ENCODE measurements at regions of chr10 and their contacts with region 1.

Region 1: DNA sequence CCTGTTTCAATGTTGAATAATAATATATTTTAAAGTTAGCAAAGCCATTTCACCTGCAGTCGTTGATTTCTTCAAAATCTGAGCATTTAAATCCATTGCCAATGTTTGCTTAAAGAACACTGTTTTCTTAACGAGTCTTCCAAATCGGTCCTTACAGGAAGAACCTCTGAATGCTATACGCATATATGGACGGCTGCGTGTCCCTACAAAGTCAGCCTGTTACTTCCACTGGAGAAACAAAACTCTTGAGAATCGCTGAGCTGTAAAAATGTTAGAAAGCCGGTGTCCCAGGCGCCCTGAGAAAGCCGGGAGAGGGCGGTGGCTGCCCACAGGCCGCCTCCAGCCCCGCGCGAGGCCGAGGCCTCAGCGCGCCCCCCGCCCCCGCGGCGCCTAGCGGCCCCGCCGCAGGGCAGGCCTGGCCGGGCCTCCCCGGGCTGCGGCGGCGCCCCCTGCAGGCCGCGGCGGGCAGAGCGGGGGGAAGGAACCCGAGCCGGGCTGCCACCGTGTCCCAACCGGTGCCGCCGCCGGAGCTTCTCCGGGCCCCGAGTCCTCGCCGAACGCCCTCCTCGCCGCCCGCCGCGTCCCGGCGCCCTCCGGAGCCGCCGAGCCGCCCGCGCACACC is at the start of gene FHIP2A:
- DNase-seq: peak; percentile 69 to 96 (median 87)
- ATAC-seq: peak; percentile 98
- H3K4me3 ChIP-seq: peak within 1 kb of the TSS; percentile 83
- H3K4me3 Mint-ChIP-seq: peak within 1 kb of the TSS; percentile 79 to 96 (median 94)
- H3K27ac ChIP-seq: peak within 1 kb of the TSS; percentile 87
- H3K27ac Mint-ChIP-seq: peak within 1 kb of the TSS; percentile 86 to 95 (median 92)
- H3K4me1 ChIP-seq: peaks cover 6 to 22% of the 10 kb centered on the region in 2 donors
- H3K4me1 Mint-ChIP-seq: peaks cover 14 to 44% (median 33%) of the 10 kb centered on the region in 7 donors
- H3K27me3 ChIP-seq: no peaks in the 10 kb centered on the region
- H3K27me3 Mint-ChIP-seq: peaks cover 0 to 29% (median 0%) of the 10 kb centered on the region in 5 donors
- total RNA-seq, gene FHIP2A: 17.5 to 28.7 (median 19.6) TPM

Region 2: GRCh38 chr10:113854011-113854760 is 967.2 kb before region 1 on chr10 and contains the starts of genes DCLRE1A and NHLRC2:
- CTCF ChIA-PET with region 1: no interaction called
- POLR2A ChIA-PET with region 1: no interaction called
- intact Hi-C with region 1: loop called in 1 of 2 experiments (anchors 10 kb)
- DNase-seq: peak; percentile 26 to 55 (median 50)
- ATAC-seq: peak; percentile 73
- H3K4me3 ChIP-seq: peak within 1 kb of the TSS; percentile 90
- H3K4me3 Mint-ChIP-seq: peak within 1 kb of the TSS; percentile 90 to 100 (median 97)
- H3K27ac ChIP-seq: peak within 1 kb of the TSS; percentile 79
- H3K27ac Mint-ChIP-seq: peak within 1 kb of the TSS; percentile 89 to 100 (median 97)
- H3K4me1 ChIP-seq: peaks cover 3 to 42% of the 10 kb centered on the region in 2 donors
- H3K4me1 Mint-ChIP-seq: peaks cover 24 to 60% (median 52%) of the 10 kb centered on the region in 7 donors
- H3K27me3 ChIP-seq: no peaks in the 10 kb centered on the region
- H3K27me3 Mint-ChIP-seq: no peaks in the 10 kb centered on the region
- total RNA-seq, gene DCLRE1A: 1.5 to 12.9 (median 4.3) TPM
- total RNA-seq, gene NHLRC2: 10.3 to 25.9 (median 20.5) TPM

Region 3: GRCh38 chr10:114304017-114304570 is 517.3 kb before region 1 on chr10:
- CTCF ChIA-PET with region 1: interaction called, 12 read pairs
- POLR2A ChIA-PET with region 1: no interaction called
- intact Hi-C with region 1: loop called (anchors 1 kb)
- DNase-seq: peak; percentile 19 to 67 (median 52)
- ATAC-seq: peak; percentile 60
- H3K4me3 ChIP-seq: peak overlapping the region; percentile 68
- H3K4me3 Mint-ChIP-seq: peak overlapping the region; percentile 83 to 94 (median 92)
- H3K27ac ChIP-seq: peak overlapping the region; percentile 6
- H3K27ac Mint-ChIP-seq: peak overlapping the region in 8 of 9 donors; percentile 4 to 86 (median 68)
- H3K4me1 ChIP-seq: peaks cover 4 to 5% of the 10 kb centered on the region in 2 donors
- H3K4me1 Mint-ChIP-seq: peaks cover 9 to 13% (median 12%) of the 10 kb centered on the region in 7 donors
- H3K27me3 ChIP-seq: no peaks in the 10 kb centered on the region
- H3K27me3 Mint-ChIP-seq: no peaks in the 10 kb centered on the region

Region 4: GRCh38 chr10:114550756-114551635 is 270.4 kb before region 1 on chr10:
- CTCF ChIA-PET with region 1: no interaction called
- POLR2A ChIA-PET with region 1: no interaction called
- intact Hi-C with region 1: loop called in 1 of 2 experiments (anchors 1 kb)
- DNase-seq: peak in 5 of 9 donors; percentile 33 to 50 (median 40)
- ATAC-seq: peak; percentile 26
- H3K4me3 ChIP-seq: no peak overlapping the region
- H3K4me3 Mint-ChIP-seq: no peak overlapping the region
- H3K27ac ChIP-seq: no peak overlapping the region
- H3K27ac Mint-ChIP-seq: peak overlapping the region in 5 of 9 donors; percentile 1 to 61 (median 20)
- H3K4me1 ChIP-seq: peaks cover 6 to 29% of the 10 kb centered on the region in 2 donors
- H3K4me1 Mint-ChIP-seq: peaks cover 16 to 37% (median 33%) of the 10 kb centered on the region in 7 donors
- H3K27me3 ChIP-seq: no peaks in the 10 kb centered on the region
- H3K27me3 Mint-ChIP-seq: peaks cover 0 to 5% (median 0%) of the 10 kb centered on the region in 5 donors

Region 5: GRCh38 chr10:114779803-114780609 is 41.4 kb before region 1 on chr10:
- CTCF ChIA-PET with region 1: no interaction called
- POLR2A ChIA-PET with region 1: no interaction called
- intact Hi-C with region 1: loop called in 1 of 2 experiments (anchors 5 kb)
- DNase-seq: no peak
- ATAC-seq: no peak
- H3K4me3 ChIP-seq: no peak overlapping the region
- H3K4me3 Mint-ChIP-seq: no peak overlapping the region
- H3K27ac ChIP-seq: no peak overlapping the region
- H3K27ac Mint-ChIP-seq: no peak overlapping the region
- H3K4me1 ChIP-seq: no peaks in the 10 kb centered on the region
- H3K4me1 Mint-ChIP-seq: peaks cover 0 to 12% (median 0%) of the 10 kb centered on the region in 7 donors
- H3K27me3 ChIP-seq: no peaks in the 10 kb centered on the region
- H3K27me3 Mint-ChIP-seq: peaks cover 7 to 29% (median 20%) of the 10 kb centered on the region in 5 donors

Region 6: DNA sequence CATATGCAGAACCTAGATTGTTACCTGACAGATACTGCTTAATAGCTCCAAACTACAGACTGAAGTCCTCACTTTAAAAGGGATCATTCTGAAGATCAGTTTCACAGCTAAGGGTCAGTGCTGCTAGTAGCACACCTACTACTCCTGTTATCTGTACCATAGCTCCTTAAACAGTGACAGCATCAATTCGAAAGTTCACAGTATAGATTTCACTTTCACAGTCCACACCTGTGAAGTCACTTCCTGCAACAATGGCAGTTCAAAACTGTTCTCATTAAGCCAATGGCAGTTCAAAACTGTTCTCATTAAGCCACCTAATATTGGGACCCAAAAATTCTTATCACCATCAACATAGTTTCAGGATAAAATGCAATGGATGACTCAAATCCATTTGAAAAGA is 10.5 kb before region 1 on chr10:
- CTCF ChIA-PET with region 1: interaction called, 14 read pairs
- POLR2A ChIA-PET with region 1: interaction called, 3 read pairs
- intact Hi-C with region 1: loop called in 1 of 2 experiments (anchors 1 kb)
- DNase-seq: no peak
- ATAC-seq: no peak
- H3K4me3 ChIP-seq: no peak overlapping the region
- H3K4me3 Mint-ChIP-seq: peak overlapping the region in 1 of 10 donors; percentile 60
- H3K27ac ChIP-seq: no peak overlapping the region
- H3K27ac Mint-ChIP-seq: peak overlapping the region in 3 of 9 donors; percentile 37 to 91 (median 58)
- H3K4me1 ChIP-seq: peaks cover 0 to 18% of the 10 kb centered on the region in 2 donors
- H3K4me1 Mint-ChIP-seq: peaks cover 0 to 31% (median 8%) of the 10 kb centered on the region in 7 donors
- H3K27me3 ChIP-seq: no peaks in the 10 kb centered on the region
- H3K27me3 Mint-ChIP-seq: peaks cover 0 to 7% (median 0%) of the 10 kb centered on the region in 5 donors

Region 7: DNA sequence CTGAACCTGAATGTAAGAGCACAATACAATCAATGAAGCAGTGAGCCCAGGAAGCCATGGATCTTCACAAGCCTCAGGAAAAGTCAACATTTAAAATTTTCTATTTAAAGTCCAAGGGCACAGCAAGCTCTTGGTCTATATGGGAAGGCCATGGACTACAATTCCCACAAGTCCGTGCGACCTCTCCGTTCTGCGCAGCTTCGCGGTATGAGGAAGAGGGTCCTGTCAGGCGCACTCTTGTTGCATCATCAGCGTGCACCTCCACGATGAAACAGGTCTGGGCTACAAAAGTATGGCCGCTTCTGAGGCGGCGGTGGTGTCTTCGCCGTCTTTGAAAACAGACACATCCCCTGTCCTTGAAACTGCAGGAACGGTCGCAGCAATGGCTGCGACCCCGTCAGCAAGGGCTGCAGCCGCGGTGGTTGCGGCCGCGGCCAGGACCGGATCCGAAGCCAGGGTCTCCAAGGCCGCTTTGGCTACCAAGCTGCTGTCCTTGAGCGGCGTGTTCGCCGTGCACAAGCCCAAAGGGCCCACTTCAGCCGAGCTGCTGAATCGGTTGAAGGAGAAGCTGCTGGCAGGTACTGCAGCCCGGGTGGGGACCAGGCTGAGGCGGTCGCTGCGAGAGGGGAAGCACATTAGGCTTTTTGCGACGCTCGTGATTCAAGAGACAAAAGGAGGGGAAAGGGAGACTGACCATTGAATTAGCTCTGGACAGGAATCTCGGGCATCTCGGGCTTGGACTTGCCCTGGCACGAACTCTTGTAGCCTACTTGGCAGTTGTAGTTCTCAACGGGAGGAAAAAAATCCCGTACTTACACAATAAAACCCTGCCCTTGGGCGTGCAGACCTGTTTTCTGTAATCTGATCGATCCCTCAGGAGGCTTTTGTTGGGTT is 116.8 kb after region 1 on chr10 and contains the start of gene TRUB1:
- CTCF ChIA-PET with region 1: interaction called, 4 read pairs
- POLR2A ChIA-PET with region 1: interaction called, 3 read pairs
- intact Hi-C with region 1: loop called (anchors 1 to 5 kb)
- DNase-seq: peak; percentile 59 to 91 (median 87)
- ATAC-seq: peak; percentile 100
- H3K4me3 ChIP-seq: peak within 1 kb of the TSS; percentile 87
- H3K4me3 Mint-ChIP-seq: peak within 1 kb of the TSS; percentile 94 to 99 (median 96)
- H3K27ac ChIP-seq: peak within 1 kb of the TSS; percentile 79
- H3K27ac Mint-ChIP-seq: peak within 1 kb of the TSS; percentile 95 to 98 (median 96)
- H3K4me1 ChIP-seq: peaks cover 12 to 23% of the 10 kb centered on the region in 2 donors
- H3K4me1 Mint-ChIP-seq: peaks cover 20 to 43% (median 31%) of the 10 kb centered on the region in 7 donors
- H3K27me3 ChIP-seq: no peaks in the 10 kb centered on the region
- H3K27me3 Mint-ChIP-seq: no peaks in the 10 kb centered on the region
- total RNA-seq, gene TRUB1: 6.8 to 14.6 (median 12.9) TPM

Region 8: GRCh38 chr10:114953047-114953446 is 131.6 kb after region 1 on chr10:
- CTCF ChIA-PET with region 1: no interaction called
- POLR2A ChIA-PET with region 1: no interaction called
- intact Hi-C with region 1: no loop called
- DNase-seq: no peak
- ATAC-seq: no peak
- H3K4me3 ChIP-seq: no peak overlapping the region
- H3K4me3 Mint-ChIP-seq: no peak overlapping the region
- H3K27ac ChIP-seq: no peak overlapping the region
- H3K27ac Mint-ChIP-seq: no peak overlapping the region
- H3K4me1 ChIP-seq: no peaks in the 10 kb centered on the region
- H3K4me1 Mint-ChIP-seq: peaks cover 20 to 62% (median 45%) of the 10 kb centered on the region in 7 donors
- H3K27me3 ChIP-seq: no peaks in the 10 kb centered on the region
- H3K27me3 Mint-ChIP-seq: no peaks in the 10 kb centered on the region

Measured in naive thymus-derived CD4-positive, alpha-beta T cell (primary cell).